ENCODE measurements at regions of chr16 and their contacts with region 1.

Region 1: GRCh38 chr16:57413301-57413730 is 8.7 kb downstream of the CCL17 start:
- DNase-seq: no peak
- H3K4me3 ChIP-seq: no peak overlapping the region
- H3K4me1 ChIP-seq: peaks cover 8% of the 10 kb centered on the region
- H3K27me3 ChIP-seq: no peaks in the 10 kb centered on the region

Region 2: GRCh38 chr16:57084257-57084770 is 329.0 kb before region 1 on chr16:
- in situ Hi-C with region 1: loop called (anchors 10 kb)
- DNase-seq: peak; percentile 50 to 80
- H3K4me3 ChIP-seq: no peak overlapping the region
- H3K4me1 ChIP-seq: peaks cover 5% of the 10 kb centered on the region
- H3K27me3 ChIP-seq: no peaks in the 10 kb centered on the region

Region 3: GRCh38 chr16:57535680-57536305 is 122.5 kb after region 1 on chr16:
- in situ Hi-C with region 1: no loop called
- DNase-seq: peak; percentile 89 to 97
- H3K4me3 ChIP-seq: peak overlapping the region; percentile 56
- H3K4me1 ChIP-seq: peaks cover 8% of the 10 kb centered on the region
- H3K27me3 ChIP-seq: no peaks in the 10 kb centered on the region

Region 4: GRCh38 chr16:57863434-57864160 is 450.3 kb after region 1 on chr16:
- in situ Hi-C with region 1: no loop called
- DNase-seq: peak; percentile 46 to 55
- H3K4me3 ChIP-seq: no peak overlapping the region
- H3K4me1 ChIP-seq: peaks cover 10% of the 10 kb centered on the region
- H3K27me3 ChIP-seq: no peaks in the 10 kb centered on the region